ENCODE measurements at regions of chr3 and their contacts with region 1.

Region 1: GRCh38 chr3:18409266-18409665 is 15.9 kb downstream of the SATB1 start:
- DNase-seq: no peak
- H3K4me3 Mint-ChIP-seq: peak overlapping the region; percentile 49
- H3K27ac Mint-ChIP-seq: peak overlapping the region; percentile 66
- H3K4me1 Mint-ChIP-seq: peaks cover 90% of the 10 kb centered on the region
- H3K27me3 Mint-ChIP-seq: no peaks in the 10 kb centered on the region

Region 2: DNA sequence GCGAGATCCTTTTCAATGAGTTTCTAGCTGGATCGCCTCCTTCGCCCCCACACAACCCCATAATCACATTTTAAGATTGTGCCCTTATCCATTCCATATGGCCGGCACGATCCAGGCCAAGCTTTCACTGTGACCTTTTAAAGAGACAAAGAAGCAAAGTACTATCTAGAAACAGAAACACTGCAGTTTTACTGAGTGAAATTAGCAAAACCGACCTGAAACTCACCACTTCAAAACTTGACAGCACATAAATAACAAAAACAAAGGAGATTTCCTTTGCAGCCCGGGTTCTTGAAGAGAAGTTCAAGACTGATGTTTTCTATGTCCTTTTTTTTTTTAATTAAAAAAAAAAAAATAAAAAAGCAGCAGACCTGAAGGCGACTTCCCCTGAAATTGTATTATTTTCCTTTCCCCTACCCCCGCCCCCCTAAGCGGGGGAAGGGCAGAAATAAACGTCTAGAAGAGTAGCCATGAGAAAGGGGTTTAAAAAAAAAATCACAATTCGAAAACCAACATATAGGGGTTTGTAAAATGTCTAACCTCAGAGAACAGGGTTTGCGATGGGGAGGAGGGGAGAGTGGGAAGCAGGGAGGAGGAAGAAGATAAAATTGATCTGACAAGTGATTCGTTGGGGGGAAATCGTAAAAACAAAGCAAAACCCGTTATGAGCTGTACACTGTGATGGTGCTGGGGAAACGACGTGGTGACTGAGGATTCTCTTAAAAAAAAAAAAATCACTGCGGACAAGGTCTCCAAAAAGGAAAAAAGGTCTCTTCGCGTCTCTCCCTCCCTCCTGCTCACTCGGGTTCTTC is 14.3 kb after region 1 on chr3:
- CTCF ChIA-PET with region 1: interaction called, 10 read pairs
- POLR2A ChIA-PET with region 1: no interaction called
- DNase-seq: peak; percentile 62
- H3K4me3 Mint-ChIP-seq: peak overlapping the region; percentile 88
- H3K27ac Mint-ChIP-seq: peak overlapping the region; percentile 93
- H3K4me1 Mint-ChIP-seq: peaks cover 59% of the 10 kb centered on the region
- H3K27me3 Mint-ChIP-seq: no peaks in the 10 kb centered on the region